ENCODE measurements at regions of chr2 and their contacts with region 1.

Region 1: DNA sequence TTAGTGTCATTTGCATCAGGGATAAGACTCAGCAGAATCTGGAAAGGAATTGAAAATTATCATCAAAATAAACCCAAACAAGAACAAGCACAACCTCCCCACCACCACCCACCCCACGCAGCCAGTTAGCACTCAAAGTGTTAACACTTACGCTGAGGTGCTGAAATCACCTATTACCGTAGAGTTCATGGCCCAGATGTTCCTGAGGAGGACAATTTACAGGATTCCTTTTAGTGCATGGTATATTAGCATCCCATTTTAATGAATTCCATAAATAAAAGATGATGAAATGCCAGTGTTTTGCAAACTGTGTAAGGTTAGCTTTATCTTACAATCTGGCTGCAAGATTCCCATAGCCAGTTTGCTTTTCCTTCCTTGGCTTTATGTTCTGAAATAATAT is 359.3 kb upstream of the SOX11 start:
- DNase-seq: no peak

Region 2: GRCh38 chr2:4047961-4048891 is 1284.7 kb before region 1 on chr2:
- intact Hi-C with region 1: no loop called
- DNase-seq: no peak

Region 3: DNA sequence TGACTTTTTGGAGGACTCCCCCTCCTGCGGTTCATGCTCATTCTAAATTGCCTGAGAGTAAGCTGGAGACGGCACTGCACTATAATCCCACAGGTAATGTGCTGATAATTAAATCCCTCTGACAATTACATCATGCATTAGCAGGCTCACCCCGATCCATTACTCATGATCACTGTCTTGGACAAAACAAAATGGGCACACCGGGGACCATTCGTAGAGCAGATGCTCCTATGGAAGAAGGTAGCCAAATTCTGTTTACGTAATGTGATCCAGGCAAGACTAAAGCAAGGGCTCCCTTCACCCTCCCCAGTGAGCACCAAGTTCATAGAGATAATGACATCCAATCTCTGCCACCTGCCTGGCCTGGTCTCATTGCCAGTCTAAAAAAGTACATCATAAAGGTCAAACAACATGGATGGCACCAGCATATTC is 297.9 kb before region 1 on chr2:
- intact Hi-C with region 1: no loop called
- DNase-seq: no peak

Region 4: GRCh38 chr2:5359397-5359796 is 26.5 kb after region 1 on chr2:
- intact Hi-C with region 1: loop called in 1 of 2 experiments (anchors 1 kb)
- DNase-seq: no peak

Region 5: DNA sequence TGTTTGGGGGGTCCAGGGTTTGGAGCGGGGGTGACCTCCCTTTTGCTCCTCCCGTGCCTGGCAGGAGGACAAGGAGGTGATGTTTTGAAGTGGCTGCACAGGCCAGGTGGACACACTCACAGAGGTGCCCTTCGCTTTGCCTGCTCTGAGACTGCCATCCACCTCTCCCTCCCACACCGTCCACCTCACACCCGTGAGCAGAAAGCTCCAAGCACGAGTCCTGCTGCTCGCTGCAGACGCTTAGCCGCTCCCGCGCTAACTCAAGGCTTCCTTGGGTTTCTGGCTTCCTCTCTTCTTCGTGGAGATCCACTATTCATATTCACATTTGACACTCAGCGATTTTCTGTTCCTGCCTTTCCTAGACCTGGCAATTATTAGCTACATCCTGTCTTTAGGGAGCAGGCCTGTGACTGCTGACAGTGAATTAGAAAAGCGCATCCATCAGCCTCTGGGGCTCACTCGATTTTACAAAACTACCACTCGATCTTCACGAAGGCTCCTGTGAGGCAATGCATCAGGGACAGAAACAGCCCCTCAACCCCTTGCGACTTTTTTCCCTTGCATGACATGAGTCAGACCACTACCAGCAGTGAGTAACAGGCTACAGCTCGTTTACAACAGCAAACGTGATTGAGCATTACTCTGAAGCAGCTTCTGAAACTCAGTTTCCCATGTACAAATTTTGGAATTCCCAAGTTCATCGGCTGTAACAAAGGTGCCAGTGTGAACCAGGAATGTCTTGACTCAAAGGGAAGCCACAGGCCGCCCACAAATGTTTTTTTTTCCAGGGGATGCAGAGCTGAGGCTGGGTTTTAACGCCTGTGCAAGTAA is 120.5 kb after region 1 on chr2:
- intact Hi-C with region 1: no loop called
- DNase-seq: no peak

Measured in posterior vena cava (tissue), 2 donors.